CD8-positive, alpha-beta memory T cell (primary cell): ENCODE measurements at regions of chr1 and their contacts with region 1.

Region 1: DNA sequence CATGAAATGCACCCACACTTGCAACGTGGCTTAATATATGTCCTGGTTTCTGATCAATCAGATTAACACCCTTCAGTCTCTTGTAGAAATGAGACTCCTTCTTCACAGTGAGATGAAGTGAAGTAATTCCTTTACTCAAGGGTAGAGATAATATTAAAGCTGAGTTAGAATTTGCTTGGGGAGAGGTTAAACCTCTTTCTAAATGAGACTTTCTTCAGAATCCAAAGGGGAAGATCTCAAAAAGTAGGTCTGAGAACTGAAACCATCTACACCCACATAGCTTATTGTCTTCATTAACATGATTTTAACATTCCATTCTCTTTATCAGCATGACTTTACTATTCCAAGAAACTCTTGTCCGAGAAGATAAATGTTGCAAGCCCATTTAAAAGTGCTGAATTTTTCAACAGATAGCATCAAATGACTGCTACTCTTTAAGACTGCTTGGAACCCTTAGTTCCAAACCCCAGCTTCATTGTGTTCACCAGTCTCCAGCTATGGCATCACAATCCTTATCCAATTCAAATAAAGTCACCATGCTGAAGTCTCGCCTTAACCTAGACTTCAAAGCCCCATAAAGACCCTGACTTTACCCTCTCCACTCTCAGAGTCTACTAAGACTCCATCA is 19.2 kb upstream of the TRAF3IP3 start:
- DNase-seq: no peak
- H3K4me3 ChIP-seq: no peak overlapping the region
- H3K4me3 Mint-ChIP-seq: no peak overlapping the region
- H3K27ac ChIP-seq: no peak overlapping the region
- H3K27ac Mint-ChIP-seq: no peak overlapping the region
- H3K4me1 ChIP-seq: no peaks in the 10 kb centered on the region
- H3K4me1 Mint-ChIP-seq: peaks cover 0 to under 1% (median under 1%) of the 10 kb centered on the region in 3 donors
- H3K27me3 ChIP-seq: no peaks in the 10 kb centered on the region
- H3K27me3 Mint-ChIP-seq: peaks cover 0 to 6% of the 10 kb centered on the region in 2 donors

Region 2: GRCh38 chr1:209747580-209748262 is 11.1 kb after region 1 on chr1:
- CTCF ChIA-PET with region 1: interaction called, 13 read pairs
- POLR2A ChIA-PET with region 1: no interaction called
- DNase-seq: peak; percentile 71 to 87 (median 82)
- H3K4me3 ChIP-seq: peak overlapping the region; percentile 76
- H3K4me3 Mint-ChIP-seq: peak overlapping the region; percentile 75 to 92 (median 86)
- H3K27ac ChIP-seq: peak overlapping the region; percentile 43
- H3K27ac Mint-ChIP-seq: peak overlapping the region; percentile 83 to 97 (median 88)
- H3K4me1 ChIP-seq: peaks cover 54% of the 10 kb centered on the region
- H3K4me1 Mint-ChIP-seq: peaks cover 47 to 60% (median 53%) of the 10 kb centered on the region in 3 donors
- H3K27me3 ChIP-seq: no peaks in the 10 kb centered on the region
- H3K27me3 Mint-ChIP-seq: no peaks in the 10 kb centered on the region